GM13976 (cell line): ENCODE measurements at regions of chr6 and their contacts with region 1.

Region 1: GRCh38 chr6:5143634-5144311 is 58.6 kb downstream of the PPP1R3G start:
- DNase-seq: peak; percentile 82
- CTCF ChIP-seq: peak; percentile 79

Region 2: GRCh38 chr6:5379647-5380242 is 236.0 kb after region 1 on chr6:
- in situ Hi-C with region 1: loop called (anchors 10 kb)
- DNase-seq: peak; percentile 60
- CTCF ChIP-seq: peak; percentile 35

Region 3: GRCh38 chr6:5645328-5646290 is 501.8 kb after region 1 on chr6:
- in situ Hi-C with region 1: no loop called
- DNase-seq: no peak
- CTCF ChIP-seq: no peak